ENCODE measurements at regions of chr1 and their contacts with region 1.

Region 1: DNA sequence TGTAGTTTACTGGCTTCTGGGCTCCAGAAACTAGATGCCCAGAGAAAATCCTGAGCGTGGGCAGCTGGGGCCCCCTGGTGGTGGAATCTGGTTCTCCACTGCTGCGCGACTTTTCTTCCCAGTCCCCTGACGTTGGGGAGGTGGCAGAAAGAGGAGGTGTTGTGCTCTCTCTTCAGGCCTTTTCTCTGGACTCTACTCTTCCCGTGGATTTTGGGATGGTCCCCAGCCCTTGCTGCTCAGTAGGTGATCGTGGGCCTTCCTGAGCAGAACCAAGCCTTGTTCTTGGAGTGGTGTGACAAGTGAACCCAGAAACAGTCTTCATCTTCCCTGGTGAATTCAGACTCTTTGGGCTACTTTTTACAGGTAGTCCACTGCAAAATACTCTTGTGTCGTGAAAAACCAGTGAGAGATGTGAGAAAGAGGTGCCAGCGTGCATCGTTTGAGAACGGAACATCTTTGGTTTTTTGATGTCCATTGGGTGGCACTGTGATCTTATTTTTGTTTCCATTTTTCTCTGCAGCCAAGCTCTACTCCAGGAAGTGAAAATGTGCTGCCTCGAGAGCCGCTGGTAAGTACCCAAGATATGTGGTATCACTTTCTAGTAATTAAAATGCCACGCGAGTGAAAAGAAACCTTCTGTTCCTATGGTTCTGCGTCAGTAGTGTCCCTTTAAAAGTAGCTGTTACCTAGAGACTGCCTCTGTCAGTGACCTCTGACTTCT is 20.2 kb downstream of the PEX14 start:
- DNase-seq: peak; percentile 59
- H3K4me3 ChIP-seq: no peak overlapping the region
- H3K27ac ChIP-seq: no peak overlapping the region
- H3K4me1 ChIP-seq: peaks cover 5% of the 10 kb centered on the region
- H3K27me3 ChIP-seq: no peaks in the 10 kb centered on the region
- CTCF ChIP-seq: peak; percentile 92 to 93
- POLR2A ChIP-seq: no peak

Region 2: DNA sequence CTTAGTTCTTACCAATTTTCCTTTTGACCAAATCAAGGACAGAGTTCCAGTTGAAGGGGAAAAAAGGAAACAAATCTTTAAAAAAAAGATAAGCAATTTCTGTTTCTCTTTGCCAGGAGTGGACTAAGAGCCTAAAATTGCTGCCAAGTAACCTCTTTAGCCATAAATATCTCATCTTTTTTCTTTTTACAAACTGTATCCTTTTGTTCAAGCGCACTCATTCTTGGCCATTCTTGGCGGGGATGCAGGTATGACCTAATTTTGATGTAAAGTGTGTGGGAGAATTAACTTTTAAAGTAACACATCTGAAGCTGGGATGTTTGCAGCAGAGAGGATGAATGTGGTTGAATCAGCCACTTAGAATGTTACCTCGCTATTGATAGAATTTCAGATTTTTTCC is 297.9 kb before region 1 on chr1:
- CTCF ChIA-PET with region 1: no interaction called
- POLR2A ChIA-PET with region 1: no interaction called
- dilution Hi-C with region 1: no loop called
- intact Hi-C with region 1: no loop called
- DNase-seq: no peak
- H3K4me3 ChIP-seq: no peak overlapping the region
- H3K27ac ChIP-seq: no peak overlapping the region
- H3K4me1 ChIP-seq: no peaks in the 10 kb centered on the region
- H3K27me3 ChIP-seq: peaks cover 6 to 7% of the 10 kb centered on the region in 2 experiments
- CTCF ChIP-seq: no peak
- POLR2A ChIP-seq: no peak

Region 3: GRCh38 chr1:10378081-10378841 is 116.7 kb before region 1 on chr1:
- CTCF ChIA-PET with region 1: interaction called, 27 read pairs
- POLR2A ChIA-PET with region 1: no interaction called
- dilution Hi-C with region 1: no loop called
- intact Hi-C with region 1: loop called (anchors 1 kb)
- DNase-seq: peak; percentile 44
- H3K4me3 ChIP-seq: no peak overlapping the region
- H3K27ac ChIP-seq: peak overlapping the region; percentile 51
- H3K4me1 ChIP-seq: peaks cover 3% of the 10 kb centered on the region
- H3K27me3 ChIP-seq: no peaks in the 10 kb centered on the region
- CTCF ChIP-seq: no peak
- POLR2A ChIP-seq: no peak

Region 4: DNA sequence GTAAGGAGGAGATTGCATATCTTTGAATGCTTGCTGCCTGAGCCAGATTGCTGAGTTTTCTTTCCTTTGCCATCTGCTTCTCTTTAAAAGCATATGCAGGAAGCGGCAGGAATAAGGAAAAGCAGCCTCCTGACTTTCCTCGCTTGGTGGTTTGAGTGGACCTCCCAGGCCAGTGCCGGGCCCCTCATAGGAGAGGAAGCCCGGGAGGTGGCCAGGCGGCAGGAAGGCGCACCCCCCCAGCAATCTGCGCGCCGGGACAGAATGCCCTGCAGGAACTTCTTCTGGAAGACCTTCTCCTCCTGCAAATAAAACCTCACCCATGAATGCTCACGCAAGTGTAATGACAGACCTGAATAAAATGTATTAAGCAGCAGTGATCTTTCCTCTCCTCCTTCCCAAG is 43.6 kb before region 1 on chr1:
- CTCF ChIA-PET with region 1: interaction called, 17 read pairs
- POLR2A ChIA-PET with region 1: no interaction called
- dilution Hi-C with region 1: no loop called
- intact Hi-C with region 1: no loop called
- DNase-seq: peak; percentile 42
- H3K4me3 ChIP-seq: peak overlapping the region in 2 of 3 experiments; percentile 18 to 27
- H3K27ac ChIP-seq: no peak overlapping the region
- H3K4me1 ChIP-seq: peaks cover 9% of the 10 kb centered on the region
- H3K27me3 ChIP-seq: no peaks in the 10 kb centered on the region
- CTCF ChIP-seq: no peak
- POLR2A ChIP-seq: no peak

Region 5: DNA sequence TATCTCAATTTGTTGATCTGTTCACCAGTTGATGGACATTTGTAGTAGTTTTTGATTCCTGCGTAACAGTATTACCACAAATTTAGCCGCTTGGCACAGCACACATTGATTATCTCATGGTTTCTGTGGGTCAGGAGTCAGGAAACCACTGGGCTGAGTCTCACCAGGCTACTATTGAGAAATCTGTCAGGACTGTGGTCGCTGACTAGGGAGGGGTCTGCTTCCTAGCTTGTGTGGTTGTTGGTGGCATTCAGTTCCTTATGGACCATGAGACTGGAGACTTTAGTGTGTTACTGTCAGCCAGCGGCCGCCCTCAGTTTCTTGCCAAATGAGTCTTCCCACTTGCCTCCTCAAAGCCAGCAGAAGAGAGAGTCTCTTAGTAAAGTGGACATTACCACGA is 10.4 kb before region 1 on chr1:
- CTCF ChIA-PET with region 1: interaction called, 13 read pairs
- POLR2A ChIA-PET with region 1: no interaction called
- dilution Hi-C with region 1: no loop called
- intact Hi-C with region 1: no loop called
- DNase-seq: no peak
- H3K4me3 ChIP-seq: no peak overlapping the region
- H3K27ac ChIP-seq: no peak overlapping the region
- H3K4me1 ChIP-seq: no peaks in the 10 kb centered on the region
- H3K27me3 ChIP-seq: no peaks in the 10 kb centered on the region
- CTCF ChIP-seq: no peak
- POLR2A ChIP-seq: no peak

Region 6: GRCh38 chr1:10867138-10867721 is 372.3 kb after region 1 on chr1:
- CTCF ChIA-PET with region 1: interaction called, 47 read pairs
- POLR2A ChIA-PET with region 1: no interaction called
- dilution Hi-C with region 1: no loop called
- intact Hi-C with region 1: loop called (anchors 1 kb)
- DNase-seq: peak; percentile 22
- H3K4me3 ChIP-seq: peak overlapping the region in 1 of 3 experiments; percentile 22
- H3K27ac ChIP-seq: no peak overlapping the region
- H3K4me1 ChIP-seq: no peaks in the 10 kb centered on the region
- H3K27me3 ChIP-seq: peaks cover 9 to 11% of the 10 kb centered on the region in 2 experiments
- CTCF ChIP-seq: peak; percentile 48 to 77
- POLR2A ChIP-seq: no peak

Measured in endothelial cell of umbilical vein (primary cell).